Activated naive CD4-positive, alpha-beta T cell treated with anti-CD3 and anti-CD28 coated beads for 36 hours (primary cell): ENCODE measurements at regions of chr1 and their contacts with region 1.

Region 1: GRCh38 chr1:201895913-201896807 is 7.5 kb downstream of the SHISA4 start:
- DNase-seq: peak; percentile 94
- H3K4me3 Mint-ChIP-seq: peak overlapping the region; percentile 50
- H3K27ac Mint-ChIP-seq: peak overlapping the region; percentile 33
- H3K4me1 Mint-ChIP-seq: peaks cover 5% of the 10 kb centered on the region
- H3K27me3 Mint-ChIP-seq: peaks cover 15% of the 10 kb centered on the region

Region 2: GRCh38 chr1:201072158-201072557 is 824.0 kb before region 1 on chr1:
- CTCF ChIA-PET with region 1: no interaction called
- intact Hi-C with region 1: no loop called
- DNase-seq: no peak
- H3K4me3 Mint-ChIP-seq: no peak overlapping the region
- H3K27ac Mint-ChIP-seq: no peak overlapping the region
- H3K4me1 Mint-ChIP-seq: no peaks in the 10 kb centered on the region
- H3K27me3 Mint-ChIP-seq: no peaks in the 10 kb centered on the region

Region 3: DNA sequence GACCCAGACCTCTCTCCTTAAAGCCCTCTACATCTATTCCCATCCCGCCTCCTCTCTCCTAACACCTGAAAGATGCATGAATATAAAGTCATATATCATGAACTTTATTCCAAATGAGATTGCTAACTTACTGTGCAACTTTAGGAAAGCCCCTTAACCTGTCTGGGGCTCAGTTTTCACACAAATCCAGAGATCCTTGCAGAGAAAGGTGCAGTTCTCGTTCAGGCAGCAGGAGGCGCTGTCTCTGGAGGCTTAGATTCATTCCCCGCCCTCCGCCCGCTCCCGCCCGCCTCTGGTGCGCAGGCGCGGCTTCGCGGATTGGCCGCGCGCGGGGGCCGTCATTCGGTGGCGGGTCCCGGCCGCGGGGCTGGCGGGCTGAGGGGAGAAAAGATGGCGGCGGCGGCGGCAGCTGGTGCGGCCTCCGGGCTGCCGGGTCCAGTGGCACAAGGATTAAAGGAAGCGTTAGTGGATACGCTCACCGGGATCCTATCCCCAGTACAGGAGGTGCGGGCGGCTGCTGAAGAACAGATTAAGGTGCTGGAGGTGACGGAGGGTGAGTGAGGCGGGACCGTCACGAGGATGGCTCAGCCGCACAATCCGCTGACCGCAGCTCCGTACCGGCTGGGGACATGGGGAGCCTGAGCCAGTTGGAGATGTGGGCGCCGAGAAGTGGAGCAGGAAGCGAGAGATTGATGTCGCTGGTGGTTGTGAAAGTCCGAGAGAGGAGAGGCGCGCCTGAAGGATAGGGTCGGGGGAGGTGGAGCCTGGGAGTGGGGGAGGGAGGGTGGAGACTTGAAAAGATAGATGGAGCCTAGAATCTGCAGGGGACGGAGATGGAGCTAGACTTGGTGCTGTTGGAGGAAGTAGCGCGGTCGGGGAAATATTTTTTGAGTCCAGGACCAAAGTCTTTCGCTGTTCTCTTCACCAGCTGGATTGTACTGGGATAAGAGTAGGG is 67.1 kb before region 1 on chr1 and contains the start of gene IPO9:
- CTCF ChIA-PET with region 1: interaction called, 13 read pairs
- intact Hi-C with region 1: no loop called
- DNase-seq: peak; percentile 98
- H3K4me3 Mint-ChIP-seq: peak within 1 kb of the TSS; percentile 99
- H3K27ac Mint-ChIP-seq: peak within 1 kb of the TSS; percentile 93
- H3K4me1 Mint-ChIP-seq: peaks cover 45% of the 10 kb centered on the region
- H3K27me3 Mint-ChIP-seq: no peaks in the 10 kb centered on the region
- total RNA-seq, gene IPO9: 63.9 to 65.7 TPM

Region 4: DNA sequence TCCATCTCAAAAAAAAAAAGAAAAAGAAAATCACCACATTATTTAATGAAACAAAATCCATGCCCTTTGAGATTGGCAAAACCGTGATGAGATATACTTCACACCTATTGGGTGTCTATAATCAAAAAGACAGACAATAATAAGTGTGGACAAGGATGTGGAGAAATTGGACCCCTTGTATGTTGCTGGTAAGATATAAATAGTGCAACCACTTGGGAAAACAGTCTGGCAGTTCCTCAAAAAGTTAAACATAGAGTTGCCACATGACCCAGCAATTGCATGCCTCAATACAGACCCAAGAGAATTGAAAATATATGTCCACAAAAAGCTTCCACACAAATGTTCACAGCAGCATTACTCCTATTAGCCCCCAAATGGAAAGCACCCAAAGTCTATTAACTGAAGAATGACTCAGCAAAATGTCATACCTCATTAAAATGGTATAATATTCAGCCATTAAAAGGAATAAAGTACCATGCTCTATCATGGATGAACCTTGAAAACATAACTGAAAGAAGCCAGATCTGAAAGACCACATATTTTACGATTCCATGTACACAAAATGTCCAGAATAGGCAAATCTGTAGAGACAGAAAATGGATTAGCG is 25.9 kb after region 1 on chr1:
- CTCF ChIA-PET with region 1: interaction called, 12 read pairs
- intact Hi-C with region 1: no loop called
- DNase-seq: no peak
- H3K4me3 Mint-ChIP-seq: no peak overlapping the region
- H3K27ac Mint-ChIP-seq: no peak overlapping the region
- H3K4me1 Mint-ChIP-seq: no peaks in the 10 kb centered on the region
- H3K27me3 Mint-ChIP-seq: peaks cover 9% of the 10 kb centered on the region

Region 5: GRCh38 chr1:201964261-201964660 is 68.1 kb after region 1 on chr1:
- CTCF ChIA-PET with region 1: interaction called, 18 read pairs
- intact Hi-C with region 1: no loop called
- DNase-seq: no peak
- H3K4me3 Mint-ChIP-seq: no peak overlapping the region
- H3K27ac Mint-ChIP-seq: no peak overlapping the region
- H3K4me1 Mint-ChIP-seq: peaks cover 2% of the 10 kb centered on the region
- H3K27me3 Mint-ChIP-seq: no peaks in the 10 kb centered on the region

Region 6: GRCh38 chr1:201999625-202000238 is 103.6 kb after region 1 on chr1:
- CTCF ChIA-PET with region 1: interaction called, 46 read pairs
- intact Hi-C with region 1: loop called (anchors 1 kb)
- DNase-seq: peak; percentile 53
- H3K4me3 Mint-ChIP-seq: no peak overlapping the region
- H3K27ac Mint-ChIP-seq: no peak overlapping the region
- H3K4me1 Mint-ChIP-seq: no peaks in the 10 kb centered on the region
- H3K27me3 Mint-ChIP-seq: no peaks in the 10 kb centered on the region

Region 7: DNA sequence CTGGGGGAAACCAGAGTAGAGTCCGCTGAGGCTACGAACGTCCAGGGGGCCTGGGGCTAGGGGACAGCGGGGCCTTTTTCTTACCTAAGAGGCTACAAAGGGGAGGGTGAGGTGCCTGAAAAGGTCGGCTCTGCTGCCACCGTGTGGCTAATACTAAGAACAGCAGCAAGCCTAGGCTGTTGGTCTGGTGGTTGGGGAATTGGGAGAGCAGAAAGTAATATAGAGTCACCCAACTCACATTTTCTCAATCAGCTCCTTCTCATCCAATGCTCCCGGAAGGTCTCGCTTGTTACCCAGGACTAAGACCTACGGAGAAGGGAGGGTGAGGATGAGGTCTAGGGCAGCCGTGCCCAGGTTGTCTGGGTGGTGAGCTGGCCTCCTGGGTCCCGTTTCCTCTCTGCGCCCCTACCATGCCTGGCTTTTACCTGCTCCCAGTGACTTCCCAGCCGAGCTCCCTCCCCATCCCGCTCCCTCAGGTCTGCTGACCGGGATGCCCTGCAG is 239.1 kb after region 1 on chr1:
- CTCF ChIA-PET with region 1: interaction called, 17 read pairs
- intact Hi-C with region 1: loop called (anchors 1 kb)
- DNase-seq: peak; percentile 61
- H3K4me3 Mint-ChIP-seq: no peak overlapping the region
- H3K27ac Mint-ChIP-seq: no peak overlapping the region
- H3K4me1 Mint-ChIP-seq: no peaks in the 10 kb centered on the region
- H3K27me3 Mint-ChIP-seq: no peaks in the 10 kb centered on the region

Region 8: DNA sequence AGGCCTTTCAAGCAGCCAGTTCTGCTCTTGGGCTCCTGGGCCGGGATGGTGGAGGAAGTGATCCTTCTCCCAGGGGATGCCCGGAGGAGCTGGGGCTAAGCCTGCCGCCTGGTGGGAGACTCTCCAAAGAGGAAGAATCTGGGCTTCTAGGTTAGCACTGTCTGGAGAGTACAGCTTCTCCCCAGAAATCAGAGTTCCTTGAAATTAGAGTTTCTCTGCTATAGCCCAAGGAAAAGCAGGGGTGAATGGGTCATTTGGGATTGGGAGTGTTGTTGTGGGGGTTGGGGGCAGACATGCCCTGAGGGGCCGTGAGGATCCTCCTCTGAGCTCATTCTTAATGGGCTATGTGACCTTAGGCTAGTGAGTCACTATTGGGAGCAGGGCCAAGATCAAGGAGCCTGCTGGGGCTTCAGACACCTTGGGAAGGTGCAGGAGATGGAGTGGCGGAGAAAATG is 304.0 kb after region 1 on chr1:
- CTCF ChIA-PET with region 1: no interaction called
- intact Hi-C with region 1: no loop called
- DNase-seq: no peak
- H3K4me3 Mint-ChIP-seq: no peak overlapping the region
- H3K27ac Mint-ChIP-seq: no peak overlapping the region
- H3K4me1 Mint-ChIP-seq: peaks cover 16% of the 10 kb centered on the region
- H3K27me3 Mint-ChIP-seq: peaks cover 9% of the 10 kb centered on the region

Region 9: DNA sequence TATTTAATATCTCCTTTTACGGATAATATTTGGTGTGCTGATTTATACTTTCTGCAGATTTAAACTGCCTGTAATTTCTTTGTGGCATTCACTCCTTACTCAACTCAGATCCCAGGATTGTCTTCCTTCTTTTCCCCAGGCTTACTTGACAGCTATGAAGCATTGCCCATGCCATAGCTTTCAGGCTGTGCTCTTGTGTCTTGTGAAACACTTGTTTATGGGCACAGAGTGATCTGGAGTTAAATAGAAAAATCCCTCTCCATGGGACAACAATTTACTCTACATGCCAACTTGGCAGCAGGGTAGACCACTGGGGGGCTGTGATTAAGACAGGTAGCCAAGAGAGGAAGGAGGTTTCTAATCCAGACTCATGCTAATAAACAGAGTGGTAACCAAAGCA is 509.8 kb after region 1 on chr1:
- CTCF ChIA-PET with region 1: no interaction called
- intact Hi-C with region 1: no loop called
- DNase-seq: no peak
- H3K4me3 Mint-ChIP-seq: no peak overlapping the region
- H3K27ac Mint-ChIP-seq: no peak overlapping the region
- H3K4me1 Mint-ChIP-seq: peaks cover 23% of the 10 kb centered on the region
- H3K27me3 Mint-ChIP-seq: no peaks in the 10 kb centered on the region